ENCODE measurements at regions of chr22 and their contacts with region 1.

Region 1: GRCh38 chr22:45169576-45170466 is 6.1 kb downstream of the NUP50 start:
- DNase-seq: peak in 2 of 9 experiments; percentile 26 to 39
- ATAC-seq: no peak
- H3K4me3 ChIP-seq: no peak overlapping the region
- H3K4me3 Mint-ChIP-seq: peak overlapping the region; percentile 66
- H3K27ac ChIP-seq: no peak overlapping the region
- H3K27ac Mint-ChIP-seq: peak overlapping the region; percentile 89
- H3K4me1 ChIP-seq: peaks cover 67% of the 10 kb centered on the region
- H3K4me1 Mint-ChIP-seq: peaks cover 81% of the 10 kb centered on the region
- H3K27me3 ChIP-seq: no peaks in the 10 kb centered on the region
- H3K27me3 Mint-ChIP-seq: no peaks in the 10 kb centered on the region
- CTCF ChIP-seq: no peak

Region 2: DNA sequence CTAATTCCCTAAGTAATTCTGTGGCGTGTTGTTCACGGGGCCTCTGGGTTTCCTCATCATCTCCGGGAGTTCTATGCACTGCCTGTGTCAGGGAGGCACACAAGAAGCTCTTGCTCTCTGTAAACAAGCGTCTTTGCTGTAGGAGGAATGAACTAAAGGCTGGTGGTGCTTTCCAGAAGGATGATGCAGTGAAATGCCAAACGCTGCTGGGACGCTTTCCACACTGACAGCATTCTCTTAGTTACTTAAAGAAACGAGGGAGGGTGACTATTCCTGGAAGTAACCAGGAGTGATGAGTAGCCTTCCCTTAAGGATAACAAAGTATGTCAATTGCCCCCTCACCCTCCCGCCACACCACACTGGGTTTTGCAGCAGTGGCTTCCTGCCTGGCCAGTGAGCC is 44.6 kb before region 1 on chr22:
- CTCF ChIA-PET with region 1: no interaction called
- POLR2A ChIA-PET with region 1: no interaction called
- intact Hi-C with region 1: no loop called
- DNase-seq: no peak
- ATAC-seq: no peak
- H3K4me3 ChIP-seq: no peak overlapping the region
- H3K4me3 Mint-ChIP-seq: no peak overlapping the region
- H3K27ac ChIP-seq: no peak overlapping the region
- H3K27ac Mint-ChIP-seq: no peak overlapping the region
- H3K4me1 ChIP-seq: peaks cover 12% of the 10 kb centered on the region
- H3K4me1 Mint-ChIP-seq: peaks cover 14% of the 10 kb centered on the region
- H3K27me3 ChIP-seq: no peaks in the 10 kb centered on the region
- H3K27me3 Mint-ChIP-seq: no peaks in the 10 kb centered on the region
- CTCF ChIP-seq: no peak

Region 3: GRCh38 chr22:45435544-45436139 is 265.8 kb after region 1 on chr22:
- CTCF ChIA-PET with region 1: no interaction called
- POLR2A ChIA-PET with region 1: no interaction called
- intact Hi-C with region 1: loop called in 1 of 2 experiments (anchors 5 kb)
- DNase-seq: peak; percentile 57 to 89 (median 83)
- ATAC-seq: peak; percentile 97
- H3K4me3 ChIP-seq: no peak overlapping the region
- H3K4me3 Mint-ChIP-seq: no peak overlapping the region
- H3K27ac ChIP-seq: no peak overlapping the region
- H3K27ac Mint-ChIP-seq: peak overlapping the region; percentile 10
- H3K4me1 ChIP-seq: peaks cover 6% of the 10 kb centered on the region
- H3K4me1 Mint-ChIP-seq: peaks cover 12% of the 10 kb centered on the region
- H3K27me3 ChIP-seq: no peaks in the 10 kb centered on the region
- H3K27me3 Mint-ChIP-seq: no peaks in the 10 kb centered on the region
- CTCF ChIP-seq: peak; percentile 95

Region 4: DNA sequence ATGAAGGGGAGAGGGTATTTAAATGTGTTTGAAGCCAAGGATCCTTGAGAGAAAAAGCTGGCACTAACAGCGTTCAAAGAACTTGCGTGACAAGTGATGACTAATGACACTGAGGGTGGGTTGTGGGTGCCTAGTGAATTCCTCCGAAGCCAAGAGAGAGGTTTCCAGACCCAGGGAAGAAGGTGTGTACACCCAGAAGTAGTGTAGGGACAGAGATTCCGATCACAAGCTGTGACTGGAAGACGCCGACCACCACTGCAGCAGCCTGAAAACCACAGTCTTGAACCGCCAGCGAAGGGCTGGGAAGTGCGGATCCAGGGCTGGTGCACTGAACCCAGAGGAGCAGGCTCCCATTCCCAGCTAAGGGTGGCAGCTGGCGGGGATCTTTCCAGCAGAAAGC is 990.0 kb after region 1 on chr22:
- CTCF ChIA-PET with region 1: no interaction called
- POLR2A ChIA-PET with region 1: no interaction called
- intact Hi-C with region 1: no loop called
- DNase-seq: no peak
- ATAC-seq: no peak
- H3K4me3 ChIP-seq: no peak overlapping the region
- H3K4me3 Mint-ChIP-seq: no peak overlapping the region
- H3K27ac ChIP-seq: no peak overlapping the region
- H3K27ac Mint-ChIP-seq: no peak overlapping the region
- H3K4me1 ChIP-seq: no peaks in the 10 kb centered on the region
- H3K4me1 Mint-ChIP-seq: peaks cover 5% of the 10 kb centered on the region
- H3K27me3 ChIP-seq: no peaks in the 10 kb centered on the region
- H3K27me3 Mint-ChIP-seq: no peaks in the 10 kb centered on the region
- CTCF ChIP-seq: no peak